ENCODE measurements at regions of chr18 and their contacts with region 1.

Region 1: DNA sequence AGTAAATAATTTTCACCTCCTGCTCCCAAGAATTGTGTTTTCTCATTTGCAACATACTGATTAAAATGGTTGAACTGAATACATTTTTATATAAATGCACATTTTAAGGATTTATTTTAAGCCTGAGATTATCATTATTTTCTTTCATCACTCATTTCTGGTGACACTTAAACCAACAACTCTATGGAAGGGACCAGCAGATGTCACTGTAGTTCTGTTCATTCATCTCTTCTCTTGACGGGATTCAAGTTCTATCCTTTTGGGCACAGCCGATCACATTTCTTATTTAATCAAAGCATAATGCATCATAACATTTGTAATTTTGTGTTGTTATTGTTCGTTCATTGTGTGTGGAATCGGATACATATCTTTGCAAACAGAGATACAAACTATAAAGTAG is 417.9 kb downstream of the HRH4 start:
- DNase-seq: no peak
- ATAC-seq: peak; percentile 55 to 65

Region 2: DNA sequence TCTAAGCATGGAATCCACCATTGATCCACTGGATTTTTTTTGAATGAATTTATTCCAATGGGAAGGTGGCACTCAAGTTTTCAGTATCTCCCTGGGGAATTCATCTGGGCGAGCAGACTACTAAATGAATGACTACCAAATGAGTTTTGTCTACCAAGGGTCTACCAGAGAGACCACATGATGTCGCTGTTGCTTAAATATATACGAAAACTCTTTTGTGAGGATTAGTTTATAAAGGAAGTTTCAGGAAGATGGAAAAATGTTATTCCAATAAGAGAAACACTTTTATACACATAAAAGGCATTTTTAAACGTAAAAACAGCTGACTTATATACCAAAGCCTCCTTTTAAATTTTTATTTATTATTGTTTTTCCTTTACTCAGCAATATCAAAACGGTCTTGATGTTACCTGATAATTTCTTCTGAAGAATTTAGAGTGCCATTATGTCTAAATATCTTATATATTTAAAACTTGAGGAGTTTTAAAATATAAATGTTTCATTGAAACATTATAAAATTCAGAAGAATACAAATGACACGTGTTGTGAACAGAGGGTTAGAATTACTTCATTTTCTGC is 278.1 kb before region 1 on chr18:
- intact Hi-C with region 1: loop called in 1 of 2 experiments (anchors 10 kb)
- DNase-seq: no peak
- ATAC-seq: no peak

Region 3: DNA sequence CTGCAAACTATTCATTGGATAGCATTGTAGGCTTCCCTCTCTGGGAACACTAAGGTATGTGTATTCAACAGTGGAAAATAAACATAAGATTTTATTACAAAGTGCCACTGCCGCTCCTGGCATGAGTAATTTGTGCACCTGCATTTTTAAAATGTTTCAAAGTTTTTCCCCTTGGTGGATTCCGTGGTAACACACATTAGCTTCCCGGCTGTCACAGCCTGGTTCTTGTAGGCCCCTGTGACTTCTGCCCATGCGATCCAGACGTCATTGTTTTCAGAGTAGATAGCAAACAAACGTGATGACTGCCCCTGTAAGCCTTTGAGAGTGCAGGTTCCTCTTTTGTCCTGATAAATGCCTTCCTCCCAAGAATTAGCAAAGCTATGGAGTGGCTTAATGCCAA is 52.7 kb after region 1 on chr18:
- intact Hi-C with region 1: no loop called
- DNase-seq: no peak
- ATAC-seq: no peak

Region 4: DNA sequence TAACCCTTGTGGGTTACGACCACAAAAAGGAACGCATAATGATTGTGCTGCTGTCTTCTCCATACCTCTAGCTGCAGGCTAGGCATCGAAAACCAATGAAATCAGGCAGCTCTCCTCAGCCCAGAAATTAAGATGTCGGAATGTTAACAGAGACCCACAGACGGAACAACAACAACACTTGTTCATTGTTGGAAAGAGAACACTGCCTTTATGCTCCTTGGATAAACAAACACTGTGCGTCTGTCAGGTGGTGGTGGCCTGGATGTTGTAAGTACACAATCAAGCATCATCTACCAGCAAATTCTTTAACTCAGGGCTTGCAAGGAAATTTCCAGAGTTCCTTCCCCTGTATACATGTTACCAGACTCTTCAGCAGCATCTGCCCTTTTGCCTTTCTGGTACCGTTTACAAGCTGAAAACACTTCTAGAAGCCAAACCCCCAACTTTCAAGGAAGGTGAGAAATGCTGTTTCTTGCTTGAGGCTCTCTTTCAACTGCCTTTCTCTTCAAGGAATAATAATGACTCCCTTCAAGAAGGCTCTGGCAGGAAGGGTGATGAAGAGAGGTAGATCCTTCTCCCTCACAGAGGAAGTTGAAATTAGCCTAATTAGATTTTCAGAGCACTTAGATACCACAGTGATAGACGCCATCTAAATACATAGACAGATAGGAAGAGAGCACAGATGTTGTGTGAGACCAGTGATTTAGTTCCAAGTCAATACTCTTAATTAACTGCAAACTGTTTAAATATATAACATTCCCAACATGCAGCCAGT is 141.0 kb after region 1 on chr18:
- intact Hi-C with region 1: no loop called
- DNase-seq: no peak
- ATAC-seq: no peak

Region 5: GRCh38 chr18:25230658-25231326 is 352.5 kb after region 1 on chr18:
- intact Hi-C with region 1: loop called in 1 of 2 experiments (anchors 10 kb)
- DNase-seq: peak; percentile 84
- ATAC-seq: peak; percentile 87 to 91

Region 6: DNA sequence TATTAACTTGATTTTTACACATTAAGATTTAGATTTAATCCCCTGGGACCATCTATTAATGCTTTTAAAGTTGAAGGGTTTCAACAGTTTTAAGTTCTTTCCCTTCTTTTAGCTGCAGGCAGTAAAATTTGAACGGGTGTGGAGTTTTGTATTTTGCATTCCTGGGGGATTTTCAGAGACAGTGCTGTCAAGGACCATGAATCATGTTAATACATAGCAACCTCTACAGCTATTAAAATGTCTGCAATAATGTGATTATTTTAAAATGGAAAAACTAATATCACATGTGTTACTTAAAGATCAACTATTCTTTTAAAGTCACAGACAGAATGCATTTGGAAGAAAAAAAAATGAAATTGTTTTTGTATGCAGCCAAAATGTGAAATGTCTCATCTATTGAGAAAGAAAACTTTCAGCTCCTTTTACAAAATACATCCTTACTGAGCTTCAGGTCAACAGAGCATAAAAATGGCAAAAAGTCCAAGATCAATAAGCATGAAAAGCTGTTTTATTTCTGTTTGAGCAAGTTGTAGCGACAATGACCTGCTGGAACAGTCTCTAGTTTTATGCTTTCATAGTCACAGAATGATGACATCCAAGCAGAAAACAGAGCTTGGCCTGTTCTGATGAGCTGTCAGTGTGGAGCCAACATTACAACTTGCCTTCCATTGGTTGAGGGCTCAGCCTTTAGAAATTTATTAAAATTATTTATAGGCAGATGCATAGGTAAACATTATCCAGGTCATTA is 495.3 kb after region 1 on chr18:
- intact Hi-C with region 1: loop called in 1 of 2 experiments (anchors 10 kb)
- DNase-seq: no peak
- ATAC-seq: no peak

Region 7: GRCh38 chr18:25669741-25670140 is 791.5 kb after region 1 on chr18:
- intact Hi-C with region 1: loop called in 1 of 2 experiments (anchors 2 kb)
- DNase-seq: no peak
- ATAC-seq: no peak

Region 8: DNA sequence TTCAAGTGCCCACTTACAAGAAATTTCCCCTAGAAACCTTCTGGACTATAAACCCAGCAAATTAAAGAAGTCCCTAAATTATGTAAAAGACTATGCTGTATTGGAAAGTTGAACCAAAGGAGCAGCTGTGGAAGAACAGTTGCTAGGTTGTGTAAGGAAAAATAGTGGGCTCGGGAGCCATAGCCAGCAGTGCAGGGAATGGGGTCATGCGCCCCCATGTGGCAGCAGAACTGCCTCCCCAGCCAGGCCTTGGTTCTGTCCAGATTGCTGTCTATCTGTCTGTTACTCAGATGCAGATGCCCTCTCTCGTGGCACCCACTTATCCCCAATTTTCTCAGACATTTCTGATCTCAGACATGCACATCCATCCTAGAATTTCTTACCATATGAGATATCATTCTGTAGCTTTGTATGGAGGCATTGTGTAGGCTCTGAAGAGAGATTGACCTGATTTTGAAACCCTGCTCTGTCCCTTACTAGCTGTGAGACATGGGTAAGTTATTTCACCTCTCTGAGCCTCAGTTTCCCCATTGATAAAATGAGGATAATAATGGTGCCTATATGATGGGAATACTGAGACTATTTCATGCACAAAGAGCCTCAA is 953.8 kb after region 1 on chr18:
- intact Hi-C with region 1: loop called (anchors 2 to 5 kb)
- DNase-seq: peak; percentile 72
- ATAC-seq: peak; percentile 86 to 88

Region 9: DNA sequence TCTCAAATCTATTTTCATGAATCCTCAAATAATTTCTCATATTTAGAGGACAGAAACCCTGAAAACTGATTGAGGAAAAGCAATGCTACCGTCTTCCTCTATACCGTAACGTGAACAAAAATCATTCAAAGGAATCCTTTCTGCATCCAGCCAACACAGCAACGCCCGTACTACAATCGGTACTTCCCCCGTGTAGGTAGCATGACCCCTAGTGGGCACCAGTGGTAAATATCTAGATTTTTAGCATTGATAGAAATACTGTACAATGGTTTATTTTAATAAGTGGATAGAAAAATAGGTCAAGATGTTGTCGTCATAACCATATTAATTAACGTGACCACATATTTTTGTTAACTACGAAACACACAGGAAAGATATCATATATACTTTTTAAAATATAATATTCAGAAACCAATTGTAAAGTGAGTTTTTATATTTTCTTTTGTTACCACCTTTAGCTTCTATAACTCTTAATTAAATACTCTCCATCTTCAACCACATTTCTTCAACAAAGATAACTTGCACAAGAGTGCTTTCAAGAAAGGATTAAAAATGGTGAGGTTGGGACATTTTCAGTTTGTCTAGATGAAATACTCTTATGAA is 1018.0 kb after region 1 on chr18:
- intact Hi-C with region 1: loop called in 1 of 2 experiments (anchors 5 kb)
- DNase-seq: peak; percentile 37
- ATAC-seq: peak in 1 of 2 donors; percentile 49